Sciatic nerve (tissue), 2 donors: ENCODE measurements at regions of chr4 and their contacts with region 1.

Region 1: DNA sequence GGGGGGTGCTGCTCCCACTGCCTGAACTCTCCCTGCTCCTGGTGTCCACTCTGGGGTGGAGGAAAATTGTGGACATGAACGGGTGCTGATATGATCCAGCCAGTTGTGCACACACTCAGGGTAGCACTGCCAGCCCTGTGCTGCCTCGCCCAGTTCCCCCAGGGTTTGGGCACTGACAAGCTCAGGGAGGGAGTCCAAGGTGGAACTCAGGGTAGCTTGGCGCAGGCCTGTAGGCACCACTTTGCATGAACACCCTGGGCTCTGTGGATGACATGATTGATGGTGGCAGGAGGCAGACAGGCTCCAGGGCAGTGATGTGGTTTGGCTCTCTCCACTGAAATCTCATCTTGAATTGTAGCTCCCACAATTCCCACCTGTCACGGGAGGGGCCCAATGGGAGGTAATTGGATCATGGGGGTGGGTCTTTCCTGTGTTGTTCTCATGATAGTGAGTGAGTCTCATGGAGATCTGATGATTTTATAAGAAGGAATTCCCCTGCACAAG is 572.0 kb upstream of the PABPC4L start:
- DNase-seq: no peak
- ATAC-seq: peak; percentile 38

Region 2: GRCh38 chr4:134747108-134747805 is 26.3 kb before region 1 on chr4:
- intact Hi-C with region 1: no loop called
- DNase-seq: no peak
- ATAC-seq: no peak

Region 3: GRCh38 chr4:134787315-134787714 is 13.8 kb after region 1 on chr4:
- intact Hi-C with region 1: loop called (anchors 1 kb)
- DNase-seq: no peak
- ATAC-seq: no peak

Region 4: DNA sequence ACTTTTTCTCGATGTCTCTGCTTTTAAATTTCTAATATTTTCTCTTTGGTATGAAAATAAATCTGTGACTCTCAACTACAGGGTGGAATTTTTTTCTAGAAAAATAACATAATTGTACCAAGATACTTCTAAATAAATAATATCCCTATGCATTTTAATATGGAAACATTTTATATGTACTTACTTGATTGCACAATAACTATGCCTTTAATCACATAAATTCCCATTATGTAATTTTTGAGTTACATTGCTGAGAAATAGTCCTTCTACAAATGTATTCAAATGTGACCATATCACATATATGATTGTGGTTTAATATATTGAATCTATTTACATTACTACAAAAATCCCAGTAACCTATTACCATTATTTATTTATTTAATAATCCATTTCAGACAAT is 971.4 kb after region 1 on chr4:
- intact Hi-C with region 1: no loop called
- DNase-seq: no peak
- ATAC-seq: no peak